ENCODE measurements at regions of chrX and their contacts with region 1.

Region 1: DNA sequence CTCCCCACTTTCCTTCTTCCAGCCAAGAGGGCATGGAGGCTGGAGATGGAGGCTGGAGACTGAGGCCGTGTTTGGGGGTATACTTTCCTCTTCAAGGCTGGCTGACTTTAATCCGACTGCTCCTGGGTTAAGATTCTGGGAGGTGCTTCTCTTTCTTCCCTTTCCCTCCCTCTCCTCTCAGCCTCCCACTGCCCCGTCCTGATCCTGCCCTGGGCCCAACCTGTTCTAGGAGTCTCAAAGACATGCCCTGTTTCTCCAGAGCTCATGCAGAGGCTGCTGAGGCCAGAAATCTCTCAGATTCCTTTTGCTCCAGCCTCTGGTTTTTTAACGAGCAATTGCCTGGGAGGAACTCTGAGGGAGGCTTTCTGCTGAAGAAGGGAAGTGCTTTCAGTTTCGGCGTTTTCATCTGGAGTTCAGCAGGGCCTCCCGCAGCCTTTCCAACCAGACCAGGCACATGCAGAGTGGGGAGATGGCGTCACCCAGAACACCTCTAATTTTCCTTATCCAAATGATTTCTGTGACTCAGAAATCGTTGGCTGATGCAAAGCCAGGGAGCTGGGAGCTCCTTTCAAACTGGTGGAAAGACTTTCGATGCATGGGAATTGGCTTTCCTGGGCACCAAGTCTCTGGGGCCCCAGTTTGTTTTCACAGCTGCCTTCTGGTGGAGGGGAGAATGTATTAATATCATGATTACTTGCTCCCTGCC is 34.5 kb upstream of the FAM9C start:
- DNase-seq: no peak
- ATAC-seq: no peak
- H3K4me3 Mint-ChIP-seq: peak overlapping the region; percentile 71
- H3K27ac Mint-ChIP-seq: peak overlapping the region; percentile 88
- H3K4me1 Mint-ChIP-seq: peaks cover 66% of the 10 kb centered on the region
- H3K27me3 Mint-ChIP-seq: no peaks in the 10 kb centered on the region

Region 2: DNA sequence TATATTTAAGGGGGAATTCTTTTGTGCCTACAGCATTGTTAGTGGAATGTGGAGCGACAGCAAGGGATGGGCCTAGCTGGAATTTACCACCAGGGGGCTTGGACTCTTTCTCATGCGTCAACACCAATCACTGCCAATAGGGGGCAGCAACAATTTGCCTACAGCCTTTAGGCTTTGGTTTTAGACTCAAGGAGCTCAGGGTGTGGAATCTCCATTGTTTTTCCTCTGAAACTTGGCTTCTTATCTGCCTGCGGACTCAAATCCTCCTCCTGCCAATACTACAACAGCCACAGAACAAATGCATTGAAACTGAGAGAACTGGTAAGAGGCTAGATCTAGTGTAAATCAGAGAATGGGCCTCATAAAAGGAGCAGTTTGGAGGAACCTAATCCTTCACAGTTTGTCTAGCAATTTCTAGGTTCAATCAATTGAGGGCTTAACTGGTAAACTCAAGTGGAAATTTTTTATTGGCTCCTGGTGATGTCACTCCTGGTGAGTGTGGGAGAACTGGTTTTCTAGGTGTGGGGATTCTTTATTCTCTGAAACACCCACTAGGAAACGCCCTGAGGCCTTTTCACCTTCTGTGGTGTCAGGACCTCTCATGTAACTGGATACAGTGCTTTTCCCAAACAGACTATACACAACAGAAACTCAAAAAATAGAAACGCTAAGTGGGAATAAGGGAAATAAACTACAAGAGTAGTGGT is 131.9 kb before region 1 on chrX:
- POLR2A ChIA-PET with region 1: interaction called, 18 read pairs
- DNase-seq: peak; percentile 55
- ATAC-seq: no peak
- H3K4me3 Mint-ChIP-seq: peak overlapping the region; percentile 73
- H3K27ac Mint-ChIP-seq: peak overlapping the region; percentile 90
- H3K4me1 Mint-ChIP-seq: peaks cover 38% of the 10 kb centered on the region
- H3K27me3 Mint-ChIP-seq: no peaks in the 10 kb centered on the region

Region 3: DNA sequence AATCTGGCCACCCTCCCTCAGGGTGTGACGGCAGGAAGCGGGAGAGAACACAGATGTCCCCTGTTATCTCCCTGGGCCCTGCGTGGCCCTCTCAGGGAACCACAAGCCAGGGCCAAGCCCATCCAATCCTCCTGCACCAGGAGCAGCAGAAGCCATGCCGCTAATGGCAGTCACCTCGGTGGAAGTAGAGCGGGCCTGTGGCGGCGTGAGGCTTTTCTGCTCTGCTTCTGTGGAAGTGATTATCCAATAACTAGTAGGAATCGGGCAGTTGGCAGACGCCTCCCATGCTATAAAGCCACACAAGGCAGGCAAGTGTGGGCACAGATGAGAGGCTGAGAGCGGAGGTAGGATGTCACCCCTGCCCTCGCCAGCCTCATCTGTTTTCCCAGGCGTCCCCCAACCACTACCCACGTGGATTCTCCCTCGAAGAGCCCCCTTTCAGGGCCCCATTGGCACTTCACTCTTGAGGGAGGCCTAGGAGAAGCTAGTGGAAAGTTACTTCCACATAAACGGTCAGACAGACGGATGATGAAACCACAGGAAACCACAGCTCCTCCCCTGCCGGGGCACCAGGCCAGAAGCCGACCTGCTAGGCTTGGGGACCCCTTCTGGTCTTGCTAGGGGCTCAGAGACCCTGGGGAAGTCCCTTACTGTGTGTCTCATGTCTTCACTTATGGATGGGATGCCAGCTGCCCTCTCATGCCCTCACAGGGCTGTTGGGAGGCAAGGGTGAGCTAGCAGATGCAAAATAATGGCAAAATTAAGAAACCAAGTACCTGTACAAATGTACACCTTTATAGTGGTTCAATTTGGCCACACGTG is 122.8 kb before region 1 on chrX:
- POLR2A ChIA-PET with region 1: interaction called, 19 read pairs
- DNase-seq: peak; percentile 71
- ATAC-seq: peak; percentile 25
- H3K4me3 Mint-ChIP-seq: peak overlapping the region; percentile 97
- H3K27ac Mint-ChIP-seq: peak overlapping the region; percentile 97
- H3K4me1 Mint-ChIP-seq: peaks cover 56% of the 10 kb centered on the region
- H3K27me3 Mint-ChIP-seq: no peaks in the 10 kb centered on the region

Region 4: DNA sequence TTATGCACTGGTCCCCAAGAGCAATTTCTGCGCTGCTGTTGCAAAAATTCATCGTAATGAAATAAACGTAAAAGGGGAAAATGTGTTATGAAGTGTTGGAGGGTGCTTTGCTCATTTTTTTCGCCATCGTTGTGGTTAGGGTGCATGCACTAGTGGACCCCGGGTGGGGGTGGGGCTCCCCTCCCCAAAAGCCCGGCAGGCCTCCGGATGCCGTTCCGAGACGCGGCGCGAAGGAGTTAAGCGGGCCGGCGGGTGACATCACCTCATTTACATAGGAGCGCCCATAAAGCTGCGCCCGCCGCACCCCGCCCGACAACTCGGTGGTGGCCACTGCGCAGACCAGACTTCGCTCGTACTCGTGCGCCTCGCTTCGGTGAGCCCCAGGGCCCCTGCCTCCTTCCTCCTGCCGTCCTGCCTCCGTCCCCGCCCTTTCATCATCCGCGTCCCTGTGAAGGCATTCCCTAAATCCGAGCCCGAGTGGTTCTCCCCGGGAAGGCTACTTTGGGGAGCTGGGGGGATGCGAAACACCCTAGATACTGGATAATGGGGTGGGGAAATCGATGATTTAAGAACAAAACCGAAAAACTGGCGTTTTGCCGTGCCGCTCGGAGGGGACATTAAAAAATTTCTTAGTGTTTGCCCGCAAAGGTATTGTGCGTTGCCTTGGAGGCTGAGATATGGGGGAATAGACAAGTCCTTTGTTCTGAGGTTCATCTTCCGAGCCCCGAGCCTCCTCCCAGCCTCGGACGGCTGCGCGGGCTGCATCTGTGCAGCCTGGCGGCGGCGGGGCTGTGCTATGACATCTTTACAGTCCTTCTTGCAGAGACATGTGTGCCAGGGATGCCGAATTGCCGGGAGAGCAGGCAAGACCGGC is 103.9 kb before region 1 on chrX and contains the start of gene TMSB4X:
- POLR2A ChIA-PET with region 1: interaction called, 768 read pairs
- DNase-seq: peak; percentile 86
- ATAC-seq: peak; percentile 48
- H3K4me3 Mint-ChIP-seq: peak within 1 kb of the TSS; percentile 97
- H3K27ac Mint-ChIP-seq: peak within 1 kb of the TSS; percentile 98
- H3K4me1 Mint-ChIP-seq: peaks cover 42% of the 10 kb centered on the region
- H3K27me3 Mint-ChIP-seq: no peaks in the 10 kb centered on the region
- total RNA-seq, gene TMSB4X: 8,001 to 8,464 TPM

Region 5: DNA sequence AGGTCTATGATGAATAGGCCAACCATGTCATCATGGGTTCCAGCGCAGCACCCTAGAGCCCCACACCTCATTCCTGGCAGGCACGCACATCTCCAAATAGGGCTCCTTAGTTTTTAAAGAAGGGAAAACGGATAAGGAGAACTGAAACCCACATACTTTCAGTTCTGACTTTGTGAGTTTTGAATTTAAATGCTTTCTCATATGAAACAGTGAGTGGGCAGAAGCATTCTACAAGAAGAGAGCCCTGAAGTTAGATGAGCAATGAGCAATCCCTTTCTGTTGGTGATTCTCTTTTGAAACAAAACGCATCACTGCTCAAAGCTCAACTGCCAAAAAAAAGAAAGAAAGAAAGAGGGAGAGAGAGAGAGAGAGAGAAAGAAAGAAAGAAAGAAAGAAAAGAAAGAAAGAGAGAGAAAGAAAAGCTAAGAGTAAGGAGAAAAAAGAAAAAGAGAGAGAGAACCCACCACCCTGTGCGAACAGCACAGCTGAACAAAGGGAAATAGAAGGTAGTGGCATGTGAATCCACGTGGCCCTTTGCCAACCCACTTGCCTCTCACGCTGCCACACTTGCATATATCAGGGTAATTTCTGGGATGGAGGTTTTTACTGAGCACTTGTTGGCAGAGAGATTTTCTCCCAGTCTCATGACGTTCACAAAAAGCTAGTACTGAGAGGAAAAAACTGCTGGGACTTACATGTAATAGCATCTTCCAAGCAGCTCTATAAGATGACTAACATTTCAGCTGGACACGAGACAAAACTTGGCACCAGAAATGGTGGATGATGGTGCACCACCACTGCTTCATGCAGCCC is 73.0 kb before region 1 on chrX:
- POLR2A ChIA-PET with region 1: interaction called, 12 read pairs
- DNase-seq: no peak
- ATAC-seq: no peak
- H3K4me3 Mint-ChIP-seq: peak overlapping the region; percentile 81
- H3K27ac Mint-ChIP-seq: peak overlapping the region; percentile 98
- H3K4me1 Mint-ChIP-seq: peaks cover 38% of the 10 kb centered on the region
- H3K27me3 Mint-ChIP-seq: no peaks in the 10 kb centered on the region

Region 6: GRCh38 chrX:13110433-13111324 is 31.8 kb after region 1 on chrX:
- POLR2A ChIA-PET with region 1: no interaction called
- DNase-seq: no peak
- ATAC-seq: no peak
- H3K4me3 Mint-ChIP-seq: no peak overlapping the region
- H3K27ac Mint-ChIP-seq: no peak overlapping the region
- H3K4me1 Mint-ChIP-seq: peaks cover 2% of the 10 kb centered on the region
- H3K27me3 Mint-ChIP-seq: no peaks in the 10 kb centered on the region

Region 7: DNA sequence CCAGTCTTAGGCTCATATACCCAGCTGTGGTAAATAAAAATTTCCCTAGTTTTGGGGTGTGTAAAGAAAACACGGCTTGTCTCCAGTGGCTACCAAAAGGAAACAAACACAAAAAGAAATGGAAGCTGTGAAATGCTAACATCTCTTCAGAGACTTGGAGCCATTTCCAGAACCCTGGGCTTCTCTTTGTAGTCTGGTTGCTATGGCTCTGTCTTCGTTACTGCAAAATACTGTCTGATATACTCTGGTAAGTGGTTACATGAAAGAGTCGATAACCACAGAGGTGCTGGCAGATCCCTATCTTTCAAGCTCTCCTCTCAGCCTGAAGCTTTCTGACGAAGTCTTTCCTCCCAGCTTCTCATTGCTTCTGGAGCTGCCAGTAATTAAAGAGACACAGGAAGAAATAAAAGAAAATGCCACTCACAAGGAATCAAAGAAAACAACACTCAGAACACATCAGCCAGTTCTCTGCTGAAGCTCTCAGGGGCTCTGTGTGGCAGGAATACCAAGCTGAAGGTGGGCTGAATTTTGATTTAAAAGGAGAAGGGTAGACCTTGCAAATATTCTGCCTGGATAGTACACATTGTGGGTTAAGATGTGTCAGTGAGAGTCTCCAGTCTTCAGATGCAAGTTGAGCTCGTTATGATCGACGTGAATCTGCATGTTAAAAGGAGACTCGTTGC is 73.1 kb after region 1 on chrX:
- POLR2A ChIA-PET with region 1: no interaction called
- DNase-seq: no peak
- ATAC-seq: peak; percentile 84
- H3K4me3 Mint-ChIP-seq: peak overlapping the region; percentile 25
- H3K27ac Mint-ChIP-seq: no peak overlapping the region
- H3K4me1 Mint-ChIP-seq: peaks cover 9% of the 10 kb centered on the region
- H3K27me3 Mint-ChIP-seq: no peaks in the 10 kb centered on the region

Region 8: DNA sequence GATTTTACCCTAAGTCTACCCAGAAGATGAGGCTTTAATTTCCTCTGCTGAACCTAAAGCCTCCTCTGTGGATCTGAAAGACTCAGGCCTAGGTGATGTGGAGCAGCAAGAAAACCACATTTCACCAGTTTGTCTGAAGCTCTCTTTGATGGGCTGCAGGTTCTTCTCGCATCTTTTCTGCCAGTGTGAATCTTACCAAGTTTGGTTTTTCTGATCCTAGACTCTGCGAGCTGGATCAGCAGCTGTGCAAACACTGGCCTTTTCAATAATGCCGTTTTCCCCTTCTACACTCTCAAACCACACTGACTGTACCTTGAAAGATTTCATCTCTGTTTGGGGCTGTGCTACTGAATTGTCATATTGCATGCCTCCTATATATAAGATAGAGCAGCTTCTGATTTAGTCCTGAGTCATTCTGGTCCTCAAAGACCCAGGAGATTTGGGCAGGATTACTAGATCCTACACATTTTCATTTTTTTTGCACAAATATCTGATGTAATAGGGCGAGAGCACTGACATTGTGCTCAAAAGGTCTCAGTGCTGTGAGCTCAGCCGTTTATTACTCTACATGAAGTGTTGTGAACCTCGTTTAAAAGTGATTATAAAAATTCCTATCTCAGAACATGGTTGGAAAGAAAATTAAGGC is 99.2 kb after region 1 on chrX:
- POLR2A ChIA-PET with region 1: no interaction called
- DNase-seq: no peak
- ATAC-seq: no peak
- H3K4me3 Mint-ChIP-seq: no peak overlapping the region
- H3K27ac Mint-ChIP-seq: no peak overlapping the region
- H3K4me1 Mint-ChIP-seq: peaks cover 3% of the 10 kb centered on the region
- H3K27me3 Mint-ChIP-seq: peaks cover 2% of the 10 kb centered on the region